Thyroid gland (tissue), 4 donors: ENCODE measurements at regions of chr1 and their contacts with region 1.

Region 1: DNA sequence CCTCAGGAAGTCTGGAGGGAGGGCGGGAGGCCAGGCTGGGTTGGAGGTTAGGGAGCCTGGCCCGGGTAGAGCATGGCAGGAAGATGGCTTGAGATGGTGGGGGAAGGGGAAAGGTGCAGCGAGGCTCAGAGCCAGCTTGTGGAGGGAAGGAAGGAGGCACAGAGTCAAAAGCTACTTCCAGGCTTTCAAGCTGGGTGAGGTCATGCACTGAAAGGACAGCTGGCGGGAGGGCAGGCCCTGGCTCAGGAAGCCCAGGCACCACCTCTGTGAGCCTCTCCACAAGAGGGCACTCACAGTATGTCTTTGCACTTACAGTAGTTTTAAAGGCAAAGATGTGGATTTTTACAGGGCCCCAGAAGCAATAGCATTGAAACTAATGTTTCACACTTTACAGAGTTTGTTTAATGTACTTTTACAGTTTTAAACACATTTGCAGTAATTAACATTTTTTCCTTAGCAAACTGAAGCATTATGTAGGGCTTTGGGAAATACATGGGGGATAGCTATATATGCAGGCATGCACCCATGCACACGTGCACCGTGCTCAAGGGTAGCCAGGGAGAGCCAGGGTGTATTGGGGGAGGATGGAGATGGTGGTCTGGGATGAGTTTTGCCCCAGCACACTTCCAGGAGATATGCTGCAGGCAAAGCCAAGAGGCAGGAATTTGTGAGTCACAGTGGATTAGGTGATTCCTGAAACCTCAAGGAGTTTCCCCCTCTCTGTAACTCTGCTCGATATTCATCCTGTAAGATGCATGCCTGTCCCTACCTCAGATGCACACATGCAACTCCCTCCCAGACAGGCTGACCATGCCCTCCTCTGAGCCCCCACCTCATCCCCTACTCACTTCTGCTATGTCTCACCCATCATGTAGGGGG is 6.1 kb upstream of the ADAM15 start:
- DNase-seq: peak; percentile 91 to 92
- H3K4me3 ChIP-seq: no peak overlapping the region
- H3K27ac ChIP-seq: peak overlapping the region in 1 of 3 donors; percentile 44
- H3K4me1 ChIP-seq: peaks cover 5 to 17% of the 10 kb centered on the region in 2 donors
- H3K27me3 ChIP-seq: no peaks in the 10 kb centered on the region
- CTCF ChIP-seq: peak; percentile 18 to 80 (median 72)
- POLR2A ChIP-seq: no peak

Region 2: DNA sequence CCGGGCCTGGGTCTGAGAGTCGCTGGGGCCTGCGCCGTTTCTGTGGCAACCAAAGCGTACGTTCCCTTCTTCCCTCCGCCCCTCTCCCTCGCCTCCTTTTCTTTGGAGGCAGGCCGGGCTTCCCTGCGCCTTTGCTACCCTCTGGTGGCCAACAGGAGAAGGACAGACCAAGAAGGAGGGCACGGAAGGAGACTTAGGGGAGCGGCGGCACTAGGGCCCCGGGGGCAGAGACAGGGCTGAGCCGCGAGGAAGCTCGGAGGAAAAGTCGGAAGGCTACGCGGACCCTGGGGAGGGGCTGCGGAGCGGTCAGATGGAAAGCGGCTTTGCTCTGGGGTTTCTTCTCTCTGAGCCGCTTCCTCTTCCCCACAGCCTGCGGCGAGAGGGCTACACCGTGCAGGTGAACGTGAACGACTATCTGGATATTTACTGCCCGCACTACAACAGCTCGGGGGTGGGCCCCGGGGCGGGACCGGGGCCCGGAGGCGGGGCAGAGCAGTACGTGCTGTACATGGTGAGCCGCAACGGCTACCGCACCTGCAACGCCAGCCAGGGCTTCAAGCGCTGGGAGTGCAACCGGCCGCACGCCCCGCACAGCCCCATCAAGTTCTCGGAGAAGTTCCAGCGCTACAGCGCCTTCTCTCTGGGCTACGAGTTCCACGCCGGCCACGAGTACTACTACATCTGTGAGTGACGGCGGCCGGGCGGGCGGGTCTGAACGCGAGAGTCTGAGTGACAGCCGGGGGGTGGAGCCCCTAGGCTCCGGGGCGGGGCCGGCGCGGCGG is 39.9 kb after region 1 on chr1:
- intact Hi-C with region 1: loop called (anchors 5 kb)
- DNase-seq: peak; percentile 95 to 96
- H3K4me3 ChIP-seq: peak overlapping the region; percentile 51 to 83 (median 58)
- H3K27ac ChIP-seq: peak overlapping the region; percentile 80 to 87 (median 81)
- H3K4me1 ChIP-seq: peaks cover 38 to 58% of the 10 kb centered on the region in 2 donors
- H3K27me3 ChIP-seq: peaks cover 38% of the 10 kb centered on the region
- CTCF ChIP-seq: peak; percentile 90 to 98 (median 96)
- POLR2A ChIP-seq: peak in 1 of 2 donors; percentile 58